HCT116 (cell line): ENCODE measurements at regions of chr2 and their contacts with region 1.

Region 1: DNA sequence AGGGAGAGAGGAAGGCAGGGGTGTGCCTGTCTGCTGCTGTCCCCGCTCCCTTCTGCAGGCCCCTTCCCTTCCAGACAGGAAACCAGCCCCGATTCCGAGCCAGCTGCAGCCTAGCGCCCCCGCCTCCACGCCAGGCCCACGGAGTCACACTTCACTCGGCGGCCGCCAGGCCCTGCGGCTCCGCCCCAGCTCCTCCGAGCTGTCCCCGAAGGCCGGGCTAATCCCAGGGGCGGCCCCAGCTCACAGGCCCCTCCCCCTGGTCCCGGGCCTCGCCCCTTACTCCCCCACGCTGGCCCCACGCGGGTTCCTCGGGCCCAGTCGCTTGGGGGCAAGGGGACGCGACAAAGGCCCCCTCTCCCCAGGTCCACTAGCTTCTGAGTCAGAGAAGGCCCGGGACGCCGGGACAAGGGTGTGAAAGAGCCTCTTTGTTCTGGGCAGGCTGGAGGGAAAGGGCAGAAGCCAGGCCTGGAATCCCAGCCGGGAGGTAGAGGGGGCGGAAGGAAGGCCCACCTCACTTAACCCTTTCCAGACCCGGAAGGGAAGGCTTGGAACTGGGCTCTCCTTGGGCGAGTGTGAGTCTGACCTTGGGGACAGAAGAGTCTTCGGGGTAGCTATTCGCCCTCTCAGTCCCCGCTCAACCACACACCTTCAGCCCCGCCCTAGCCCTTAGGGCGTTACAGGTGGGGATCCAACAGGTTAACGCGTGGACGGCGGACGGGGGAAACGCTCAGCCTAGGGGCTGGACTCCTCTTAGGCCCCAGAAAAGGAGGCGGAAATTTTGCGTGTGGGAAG is 1.2 kb downstream of the RTKN start:
- DNase-seq: peak; percentile 80
- ATAC-seq: peak; percentile 84
- H3K4me3 ChIP-seq: peak overlapping the region; percentile 66 to 69
- H3K27ac ChIP-seq: peak overlapping the region; percentile 99
- H3K4me1 ChIP-seq: peaks cover 29 to 47% of the 10 kb centered on the region in 2 experiments
- H3K27me3 ChIP-seq: no peaks in the 10 kb centered on the region
- CTCF ChIP-seq: 0 out of 6 replicates have a peak, but pooled peaks of 1 of the 3 experiments have one; percentile 3
- POLR2A ChIP-seq: no peak
- RAD21 ChIP-seq: no peak

Region 2: DNA sequence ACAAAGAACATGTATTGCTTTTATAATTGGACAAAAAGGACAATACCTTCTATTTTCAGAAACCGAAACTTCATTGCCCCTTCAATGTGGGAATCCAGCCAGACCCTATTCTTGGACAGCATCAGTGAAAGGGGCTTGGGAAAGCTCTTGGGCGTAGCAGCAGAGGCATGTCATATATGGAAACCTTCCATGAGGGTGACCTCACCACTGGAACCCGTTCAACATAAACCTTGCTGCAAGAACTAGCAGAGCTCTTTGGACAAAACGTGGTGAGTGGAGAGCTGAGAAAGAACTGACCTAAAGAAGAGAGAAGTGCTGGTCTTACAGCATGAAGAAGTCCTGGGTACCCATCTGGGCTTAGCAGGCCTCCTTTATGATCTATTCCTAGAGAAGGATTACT is 570.5 kb before region 1 on chr2:
- CTCF ChIA-PET with region 1: no interaction called
- POLR2A ChIA-PET with region 1: no interaction called
- RAD21 ChIA-PET with region 1: no interaction called
- intact Hi-C with region 1: no loop called
- DNase-seq: no peak
- ATAC-seq: no peak
- H3K4me3 ChIP-seq: no peak overlapping the region
- H3K27ac ChIP-seq: no peak overlapping the region
- H3K4me1 ChIP-seq: no peaks in the 10 kb centered on the region
- H3K27me3 ChIP-seq: no peaks in the 10 kb centered on the region
- CTCF ChIP-seq: no peak
- POLR2A ChIP-seq: no peak
- RAD21 ChIP-seq: no peak

Region 3: GRCh38 chr2:73993376-73994145 is 447.0 kb before region 1 on chr2:
- CTCF ChIA-PET with region 1: no interaction called
- POLR2A ChIA-PET with region 1: no interaction called
- RAD21 ChIA-PET with region 1: no interaction called
- intact Hi-C with region 1: no loop called
- DNase-seq: no peak
- ATAC-seq: peak; percentile 49; the same call in 1 of the 2 replicates
- H3K4me3 ChIP-seq: 0 out of 4 replicates have a peak overlapping the region, but pooled peaks of 1 of the 2 experiments have one; percentile 10
- H3K27ac ChIP-seq: no peak overlapping the region
- H3K4me1 ChIP-seq: peaks cover 7 to 51% of the 10 kb centered on the region in 2 experiments; a peak in 3 of 4 replicates
- H3K27me3 ChIP-seq: no peaks in the 10 kb centered on the region
- CTCF ChIP-seq: no peak
- POLR2A ChIP-seq: no peak
- RAD21 ChIP-seq: no peak

Region 4: GRCh38 chr2:74423231-74424095 is 17.1 kb before region 1 on chr2:
- CTCF ChIA-PET with region 1: no interaction called
- POLR2A ChIA-PET with region 1: interaction called, 3 read pairs
- RAD21 ChIA-PET with region 1: no interaction called
- intact Hi-C with region 1: loop called (anchors 1 kb)
- DNase-seq: no peak
- ATAC-seq: no peak
- H3K4me3 ChIP-seq: no peak overlapping the region
- H3K27ac ChIP-seq: no peak overlapping the region
- H3K4me1 ChIP-seq: peaks cover 0 to 36% of the 10 kb centered on the region in 2 experiments; a peak in 3 of 4 replicates
- H3K27me3 ChIP-seq: no peaks in the 10 kb centered on the region
- CTCF ChIP-seq: no peak
- POLR2A ChIP-seq: no peak
- RAD21 ChIP-seq: no peak